HepG2 (cell line): ENCODE measurements at regions of chr7 and their contacts with region 1.

Region 1: GRCh38 chr7:2403014-2403717 is at the start of gene CHST12:
- DNase-seq: peak; percentile 82
- ATAC-seq: peak; percentile 54
- H3K4me3 ChIP-seq: peak within 1 kb of the TSS; percentile 80 to 96 (median 82)
- H3K27ac ChIP-seq: peak within 1 kb of the TSS; percentile 70
- H3K4me1 ChIP-seq: peaks cover 58% of the 10 kb centered on the region
- H3K27me3 ChIP-seq: no peaks in the 10 kb centered on the region
- CTCF ChIP-seq: no peak
- EP300 ChIP-seq: no peak
- POLR2A ChIP-seq: peak; percentile 82 to 86
- RAD21 ChIP-seq: no peak
- total RNA-seq, gene CHST12: 3.7 and 6.4 TPM in 2 replicates

Region 2: GRCh38 chr7:1520574-1521234 is 882.5 kb before region 1 on chr7:
- CTCF ChIA-PET with region 1: no interaction called
- POLR2A ChIA-PET with region 1: no interaction called
- in situ Hi-C with region 1: no loop called
- intact Hi-C with region 1: no loop called
- DNase-seq: peak; percentile 96
- ATAC-seq: peak; percentile 77
- H3K4me3 ChIP-seq: peak overlapping the region in 2 of 3 experiments; percentile 30 to 50; a peak in 4 of 6 replicates
- H3K27ac ChIP-seq: peak overlapping the region; percentile 60
- H3K4me1 ChIP-seq: peaks cover 68% of the 10 kb centered on the region
- H3K27me3 ChIP-seq: peaks cover 0 to 15% of the 10 kb centered on the region in 2 experiments; a peak in 4 of 5 replicates
- CTCF ChIP-seq: peak; percentile 36
- EP300 ChIP-seq: peak; percentile 56 to 76; a peak in 3 of 4 replicates
- POLR2A ChIP-seq: no peak; a peak in 1 of 4 replicates
- RAD21 ChIP-seq: no peak

Region 3: GRCh38 chr7:2354186-2354938 is 48.8 kb before region 1 on chr7 and contains the start of gene EIF3B:
- CTCF ChIA-PET with region 1: no interaction called
- POLR2A ChIA-PET with region 1: interaction called, 10 read pairs
- in situ Hi-C with region 1: no loop called
- intact Hi-C with region 1: no loop called
- DNase-seq: peak; percentile 87
- ATAC-seq: peak; percentile 89
- H3K4me3 ChIP-seq: peak within 1 kb of the TSS; percentile 96 to 98 (median 97)
- H3K27ac ChIP-seq: peak within 1 kb of the TSS; percentile 100
- H3K4me1 ChIP-seq: peaks cover 53% of the 10 kb centered on the region
- H3K27me3 ChIP-seq: no peaks in the 10 kb centered on the region; a peak in 1 of 5 replicates
- CTCF ChIP-seq: no peak
- EP300 ChIP-seq: no peak
- POLR2A ChIP-seq: peak; percentile 81 to 86
- RAD21 ChIP-seq: no peak; the same call in 1 of the 2 replicates
- total RNA-seq, gene EIF3B: 241 and 244 TPM in 2 replicates

Region 4: DNA sequence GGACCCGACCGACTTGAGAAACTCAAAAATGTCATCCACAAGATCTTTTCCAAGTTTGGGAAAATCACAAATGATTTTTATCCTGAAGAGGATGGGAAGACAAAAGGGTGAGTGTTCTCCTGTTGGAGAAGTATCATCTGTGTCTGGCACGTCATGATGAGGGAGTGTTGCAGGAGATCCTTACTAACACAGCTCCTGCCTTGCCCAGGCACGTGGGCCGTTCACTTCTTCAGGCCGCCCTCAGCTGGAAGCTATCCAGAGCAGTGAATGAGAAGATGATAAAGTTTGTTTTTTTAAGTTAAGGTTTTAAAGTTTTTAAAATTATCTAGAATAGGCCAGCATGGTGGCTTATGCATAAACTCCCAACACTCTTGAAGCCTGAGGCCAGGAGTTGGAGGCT is 42.4 kb before region 1 on chr7:
- CTCF ChIA-PET with region 1: no interaction called
- POLR2A ChIA-PET with region 1: no interaction called
- in situ Hi-C with region 1: no loop called
- intact Hi-C with region 1: loop called (anchors 5 kb)
- DNase-seq: no peak
- ATAC-seq: no peak
- H3K4me3 ChIP-seq: no peak overlapping the region
- H3K27ac ChIP-seq: no peak overlapping the region
- H3K4me1 ChIP-seq: peaks cover 43% of the 10 kb centered on the region
- H3K27me3 ChIP-seq: no peaks in the 10 kb centered on the region; a peak in 1 of 5 replicates
- CTCF ChIP-seq: no peak
- EP300 ChIP-seq: no peak
- POLR2A ChIP-seq: no peak
- RAD21 ChIP-seq: no peak

Region 5: DNA sequence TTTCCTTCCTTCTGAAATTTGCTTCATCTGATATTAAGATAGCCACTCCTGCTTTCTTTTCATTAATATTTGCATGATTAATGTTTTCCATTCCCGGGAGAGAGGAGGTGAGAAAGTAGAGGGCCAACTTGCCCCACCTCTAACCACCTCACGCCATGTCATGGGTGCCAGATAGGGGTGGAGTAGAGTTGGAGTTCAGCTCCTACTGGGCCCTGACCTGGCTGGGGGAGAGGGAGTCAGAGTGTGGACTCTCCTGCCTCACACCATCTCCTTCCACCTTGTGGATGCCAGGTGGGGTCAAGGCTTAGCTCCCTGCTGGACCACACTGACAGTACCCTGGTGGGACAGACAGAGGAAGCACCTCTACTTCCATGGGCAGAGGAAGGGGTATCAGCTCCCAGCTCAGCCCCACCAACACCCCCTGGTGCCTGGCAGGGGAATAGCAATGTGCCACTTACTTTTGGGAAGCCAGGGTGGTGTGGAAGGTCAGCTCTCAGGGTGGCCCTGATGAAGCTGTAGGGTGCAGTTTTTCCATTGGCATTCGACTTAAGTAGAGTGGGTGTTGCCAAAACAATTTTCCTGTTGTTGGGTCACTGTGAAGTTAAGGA is 28.2 kb after region 1 on chr7:
- CTCF ChIA-PET with region 1: interaction called, 5 read pairs
- POLR2A ChIA-PET with region 1: no interaction called
- in situ Hi-C with region 1: no loop called
- intact Hi-C with region 1: loop called (anchors 1 kb)
- DNase-seq: peak; percentile 45
- ATAC-seq: peak; percentile 92
- H3K4me3 ChIP-seq: no peak overlapping the region
- H3K27ac ChIP-seq: no peak overlapping the region
- H3K4me1 ChIP-seq: peaks cover 16% of the 10 kb centered on the region
- H3K27me3 ChIP-seq: no peaks in the 10 kb centered on the region
- CTCF ChIP-seq: peak; percentile 88
- EP300 ChIP-seq: no peak
- POLR2A ChIP-seq: no peak
- RAD21 ChIP-seq: peak; percentile 76